Tibial artery (tissue), 4 donors: ENCODE measurements at regions of chr12 and their contacts with region 1.

Region 1: DNA sequence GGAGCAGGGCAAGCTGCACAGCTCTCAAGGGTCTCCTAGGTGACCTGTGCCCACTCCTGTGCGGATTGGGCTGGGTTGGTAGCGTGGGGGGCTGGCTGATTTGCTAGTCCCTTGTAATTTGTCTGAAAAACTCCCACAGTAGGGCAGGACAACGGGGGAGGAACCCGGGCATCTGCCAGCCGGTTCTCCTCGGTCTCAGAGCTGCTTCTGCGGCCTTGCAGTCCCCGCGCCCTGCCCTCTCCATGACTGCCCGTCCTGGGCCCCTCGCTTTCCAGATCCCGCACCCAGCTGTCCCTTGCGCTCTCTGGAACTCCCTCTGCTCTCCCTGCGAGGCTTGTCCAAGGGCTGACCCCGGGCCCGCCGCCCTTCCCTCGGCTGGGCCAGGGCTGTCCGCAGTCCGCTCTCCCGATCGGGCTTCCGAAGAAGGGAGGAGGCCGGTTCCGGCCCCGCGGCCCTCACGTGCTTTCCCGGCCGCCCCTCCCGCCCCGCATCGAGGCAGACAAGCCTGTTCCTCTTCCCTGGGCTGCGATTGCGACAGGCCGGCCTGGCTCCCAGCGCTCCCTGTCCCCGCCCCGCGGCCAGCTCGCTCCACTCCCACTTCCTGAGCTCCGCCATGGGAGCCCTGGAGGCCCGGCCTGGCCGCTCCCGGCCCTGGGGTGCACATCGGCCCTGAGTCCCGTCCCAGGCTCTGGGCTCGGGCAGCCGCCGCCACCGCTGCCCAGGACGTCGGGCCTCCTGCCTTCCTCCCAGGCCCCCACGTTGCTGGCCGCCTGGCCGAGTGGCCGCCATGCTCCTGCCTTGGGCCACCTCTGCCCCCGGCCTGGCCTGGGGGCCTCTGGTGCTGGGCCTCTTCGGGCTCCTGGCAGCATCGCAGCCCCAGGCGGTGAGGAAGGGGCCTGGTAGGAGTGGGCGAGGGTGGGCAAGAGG is at the start of gene LTBR:
- DNase-seq: peak; percentile 97 to 99
- H3K4me3 ChIP-seq: peak within 1 kb of the TSS; percentile 81 to 82
- H3K27ac ChIP-seq: peak within 1 kb of the TSS; percentile 95 to 98
- H3K4me1 ChIP-seq: peaks cover 0 to 43% (median 29%) of the 10 kb centered on the region in 4 donors
- H3K27me3 ChIP-seq: no peaks in the 10 kb centered on the region
- CTCF ChIP-seq: no peak

Region 2: GRCh38 chr12:6335451-6336078 is 48.3 kb before region 1 on chr12:
- intact Hi-C with region 1: loop called (anchors 5 kb)
- DNase-seq: peak; percentile 85 to 89
- H3K4me3 ChIP-seq: peak overlapping the region; percentile 97 to 99
- H3K27ac ChIP-seq: peak overlapping the region; percentile 99
- H3K4me1 ChIP-seq: peaks cover 0 to 79% (median 71%) of the 10 kb centered on the region in 4 donors
- H3K27me3 ChIP-seq: no peaks in the 10 kb centered on the region
- CTCF ChIP-seq: peak; percentile 45 to 54